ENCODE measurements at regions of chr5 and their contacts with region 1.

Region 1: DNA sequence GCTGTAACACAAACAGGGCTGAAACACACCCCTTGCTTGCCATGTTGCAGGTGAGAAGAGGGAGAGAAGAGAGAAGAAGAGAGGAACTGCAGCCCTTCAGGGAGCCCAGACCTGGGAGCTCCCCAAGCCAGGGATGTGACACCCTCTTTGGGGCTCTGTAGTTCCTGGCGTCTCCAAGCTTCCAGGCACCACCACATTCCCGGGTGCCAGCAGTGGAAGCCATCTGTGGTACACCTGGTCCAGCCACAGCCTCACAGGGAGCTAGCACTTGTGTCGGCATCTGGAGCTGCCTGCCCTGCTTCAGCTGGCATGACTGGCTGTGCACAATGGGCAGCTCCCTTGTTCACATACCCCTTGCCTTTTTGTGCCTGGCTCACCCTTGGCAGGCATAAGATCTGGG is 182.1 kb downstream of the DEPDC1B start:
- DNase-seq: no peak
- H3K27ac ChIP-seq: no peak overlapping the region
- CTCF ChIP-seq: no peak

Region 2: DNA sequence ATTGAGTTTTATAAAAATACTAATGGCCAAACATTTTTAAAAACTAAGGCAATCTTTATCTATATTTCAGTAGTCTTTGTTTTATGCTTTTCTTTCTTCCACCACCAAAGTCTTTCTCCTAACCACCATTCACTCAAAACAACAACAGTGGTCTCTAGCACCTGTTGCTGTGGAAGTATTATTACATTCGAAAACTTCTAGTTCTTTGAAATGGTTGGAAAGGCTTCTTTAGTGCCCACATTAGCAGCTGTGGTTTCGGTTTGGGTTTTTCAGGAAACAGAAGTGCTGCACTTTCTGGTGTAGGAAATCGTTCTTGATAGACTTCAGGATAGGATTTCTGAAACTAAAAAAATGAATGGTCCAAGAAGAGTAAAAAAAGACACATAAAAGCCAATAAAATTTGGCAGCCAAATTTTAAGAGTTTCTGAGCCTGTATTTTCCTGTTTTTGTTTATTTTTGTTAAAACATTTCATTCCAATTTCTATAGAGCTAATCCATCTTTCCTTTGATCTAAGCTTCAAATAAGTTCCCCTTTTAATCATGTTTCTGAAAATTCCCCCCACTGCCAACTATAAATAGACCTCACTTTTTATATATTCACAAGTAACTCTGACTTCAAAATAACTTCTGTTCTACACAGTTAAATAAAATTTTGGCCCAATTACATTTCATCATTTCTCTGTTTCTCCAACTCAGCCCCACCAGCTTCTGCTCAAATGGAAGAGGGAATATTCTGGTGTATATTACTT is 79.9 kb after region 1 on chr5:
- CTCF ChIA-PET with region 1: no interaction called
- POLR2A ChIA-PET with region 1: interaction called, 10 read pairs
- DNase-seq: no peak
- H3K27ac ChIP-seq: no peak overlapping the region
- CTCF ChIP-seq: no peak

Region 3: GRCh38 chr5:60630179-60630578 is 112.3 kb after region 1 on chr5:
- CTCF ChIA-PET with region 1: no interaction called
- POLR2A ChIA-PET with region 1: no interaction called
- DNase-seq: no peak
- H3K27ac ChIP-seq: no peak overlapping the region
- CTCF ChIP-seq: no peak

Measured in RWPE1 (cell line).